Mammary epithelial cell (primary cell): ENCODE measurements at regions of chr13 and their contacts with region 1.

Region 1: DNA sequence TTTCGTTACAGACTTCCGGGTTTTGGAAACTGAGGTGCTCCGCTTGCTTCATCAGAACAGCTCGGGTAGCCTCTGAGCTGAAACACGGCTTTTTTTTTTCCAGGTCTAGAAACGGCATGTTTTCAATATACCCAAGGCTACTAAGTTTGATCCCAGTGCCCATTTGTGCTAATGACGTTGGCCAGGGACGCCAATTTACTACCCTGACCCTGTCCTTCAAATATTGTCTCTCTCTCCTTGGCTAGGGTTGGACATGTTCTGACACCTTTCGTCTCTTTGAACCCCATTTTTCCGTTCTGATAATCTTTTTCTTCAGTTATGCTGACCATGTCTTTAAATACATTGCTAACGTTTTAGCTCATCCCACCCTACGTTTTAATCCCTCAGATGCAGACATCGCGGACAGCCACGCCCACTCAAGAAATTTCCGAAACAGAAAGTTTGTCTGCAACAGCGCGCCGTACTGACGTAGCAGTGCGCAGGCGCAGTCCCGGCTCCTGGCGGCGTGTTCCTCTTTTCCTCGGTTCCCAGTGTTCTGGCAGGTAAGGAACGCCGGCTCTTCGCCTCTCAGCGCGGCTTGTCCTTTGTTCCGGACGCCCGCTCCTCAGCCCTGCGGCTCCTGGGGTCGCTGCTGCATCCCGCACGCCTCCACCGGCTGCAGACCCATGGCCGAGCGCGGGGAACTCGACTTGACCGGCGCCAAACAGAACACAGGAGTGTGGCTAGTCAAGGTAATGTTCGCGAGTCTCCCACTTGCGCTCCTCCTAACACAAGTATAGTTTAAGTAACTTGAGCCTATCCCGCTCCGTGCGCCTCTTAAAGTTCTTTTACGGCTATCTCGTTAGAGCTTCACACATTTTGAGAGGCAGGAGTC is at the start of gene GTF2F2:
- DNase-seq: peak; percentile 85
- H3K4me3 ChIP-seq: peak within 1 kb of the TSS; percentile 75 to 93 (median 82)
- H3K27ac ChIP-seq: peak within 1 kb of the TSS; percentile 87
- H3K4me1 ChIP-seq: peaks cover 13% of the 10 kb centered on the region
- H3K27me3 ChIP-seq: no peaks in the 10 kb centered on the region
- CTCF ChIP-seq: no peak
- total RNA-seq, gene GTF2F2: 26.5 to 48.9 TPM

Region 2: GRCh38 chr13:44969551-44970484 is 150.4 kb before region 1 on chr13:
- CTCF ChIA-PET with region 1: no interaction called
- dilution Hi-C with region 1: no loop called
- in situ Hi-C with region 1: no loop called
- intact Hi-C with region 1: no loop called
- DNase-seq: peak; percentile 28
- H3K4me3 ChIP-seq: no peak overlapping the region
- H3K27ac ChIP-seq: no peak overlapping the region
- H3K4me1 ChIP-seq: peaks cover 3% of the 10 kb centered on the region
- H3K27me3 ChIP-seq: no peaks in the 10 kb centered on the region
- CTCF ChIP-seq: peak; percentile 68 to 72

Region 3: GRCh38 chr13:45047394-45048310 is 72.6 kb before region 1 on chr13:
- CTCF ChIA-PET with region 1: no interaction called
- dilution Hi-C with region 1: no loop called
- in situ Hi-C with region 1: loop called in 1 of 2 experiments (anchors 5 kb)
- intact Hi-C with region 1: loop called (anchors 1 kb)
- DNase-seq: peak; percentile 77
- H3K4me3 ChIP-seq: peak overlapping the region; percentile 48 to 59 (median 52)
- H3K27ac ChIP-seq: peak overlapping the region; percentile 16
- H3K4me1 ChIP-seq: peaks cover 9% of the 10 kb centered on the region
- H3K27me3 ChIP-seq: no peaks in the 10 kb centered on the region
- CTCF ChIP-seq: peak; percentile 92 to 94

Region 4: DNA sequence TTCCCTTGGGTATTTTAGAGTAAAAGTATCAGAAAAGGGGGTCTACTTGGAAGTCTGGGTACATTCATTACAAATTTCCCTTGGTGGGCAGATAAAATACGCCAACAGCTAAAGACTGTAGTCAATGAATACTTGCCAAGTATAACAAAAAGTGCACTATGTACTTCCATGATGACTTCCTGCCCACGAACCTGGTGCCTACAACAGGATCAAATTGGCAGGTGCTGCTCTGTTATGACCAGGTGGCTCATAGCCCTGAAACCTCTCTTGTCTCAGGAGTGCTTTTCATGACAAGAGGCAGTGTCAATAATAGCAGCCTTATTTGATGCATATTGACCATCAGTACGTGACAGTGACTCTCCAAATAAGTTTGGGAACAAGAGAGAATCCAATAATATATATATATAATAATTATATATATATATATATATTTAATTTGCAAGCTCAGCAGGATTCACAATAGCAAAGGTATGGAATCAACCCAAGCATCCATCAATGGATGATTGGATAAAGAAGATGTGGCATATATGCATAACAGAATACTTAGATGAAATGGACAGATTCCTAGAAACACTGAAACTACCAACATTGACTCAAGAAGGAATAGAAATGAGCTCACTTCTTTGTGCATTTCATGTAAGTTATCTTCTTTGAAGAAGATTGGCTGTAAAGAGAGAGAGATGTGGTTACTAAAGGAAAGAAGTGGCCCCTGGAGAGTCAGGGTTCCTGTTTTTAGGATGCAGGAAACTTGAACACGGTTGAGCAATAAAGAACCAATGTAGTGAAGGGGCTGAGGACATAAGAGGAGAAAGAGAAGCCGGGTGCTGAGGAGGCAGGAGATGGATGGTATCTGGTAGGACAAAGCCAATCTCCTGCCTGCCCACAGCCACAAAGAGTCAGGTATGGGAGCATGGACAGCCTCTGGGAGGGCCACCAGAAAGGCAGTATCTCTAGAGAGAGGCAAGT is 51.9 kb before region 1 on chr13:
- CTCF ChIA-PET with region 1: no interaction called
- dilution Hi-C with region 1: loop called (anchors 5 kb)
- in situ Hi-C with region 1: no loop called
- intact Hi-C with region 1: no loop called
- DNase-seq: no peak
- H3K4me3 ChIP-seq: no peak overlapping the region
- H3K27ac ChIP-seq: no peak overlapping the region
- H3K4me1 ChIP-seq: no peaks in the 10 kb centered on the region
- H3K27me3 ChIP-seq: no peaks in the 10 kb centered on the region
- CTCF ChIP-seq: no peak

Region 5: DNA sequence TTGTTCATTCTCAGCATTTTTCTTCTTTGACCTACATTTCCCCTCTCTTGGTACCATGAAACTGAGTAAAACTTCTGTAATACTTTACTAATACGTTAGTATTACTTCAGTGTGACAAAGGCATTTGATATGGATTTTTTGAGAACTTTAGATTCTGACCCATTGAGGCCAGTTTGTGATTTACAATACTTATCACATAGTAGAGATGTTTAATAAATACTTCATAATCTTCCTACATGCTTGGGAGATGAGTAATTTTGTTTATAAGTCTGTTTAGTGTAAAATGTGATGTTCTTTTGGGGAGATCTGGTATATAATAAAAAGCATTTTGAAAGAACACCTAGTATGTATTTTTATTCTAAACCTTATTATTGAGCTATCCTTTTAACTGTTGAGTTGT is 29.7 kb after region 1 on chr13:
- CTCF ChIA-PET with region 1: no interaction called
- dilution Hi-C with region 1: no loop called
- in situ Hi-C with region 1: no loop called
- intact Hi-C with region 1: no loop called
- DNase-seq: no peak
- H3K4me3 ChIP-seq: no peak overlapping the region
- H3K27ac ChIP-seq: no peak overlapping the region
- H3K4me1 ChIP-seq: peaks cover 8% of the 10 kb centered on the region
- H3K27me3 ChIP-seq: no peaks in the 10 kb centered on the region
- CTCF ChIP-seq: no peak

Region 6: GRCh38 chr13:45180713-45181601 is 60.7 kb after region 1 on chr13:
- CTCF ChIA-PET with region 1: interaction called, 11 read pairs
- dilution Hi-C with region 1: no loop called
- in situ Hi-C with region 1: no loop called
- intact Hi-C with region 1: no loop called
- DNase-seq: no peak
- H3K4me3 ChIP-seq: no peak overlapping the region
- H3K27ac ChIP-seq: no peak overlapping the region
- H3K4me1 ChIP-seq: peaks cover 6% of the 10 kb centered on the region
- H3K27me3 ChIP-seq: peaks cover 1% of the 10 kb centered on the region
- CTCF ChIP-seq: no peak

Region 7: DNA sequence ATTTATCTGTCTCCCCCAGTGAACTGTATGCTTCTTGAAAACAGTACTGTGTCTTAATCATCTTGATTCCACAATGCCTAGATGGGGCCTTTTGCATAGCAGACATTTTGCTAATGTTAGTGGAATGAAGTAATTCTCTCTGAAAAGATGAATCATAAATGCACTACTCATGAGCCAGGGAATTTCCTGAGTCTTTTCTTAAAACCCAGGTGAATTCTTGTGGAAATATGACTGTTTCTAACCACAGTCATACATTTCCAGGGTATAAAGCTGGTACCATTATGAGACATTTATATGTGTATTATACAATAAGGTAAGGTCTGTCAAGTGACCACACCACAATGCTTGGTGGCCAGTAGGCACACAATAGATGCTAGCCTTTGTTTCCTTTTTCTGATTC is 86.1 kb after region 1 on chr13:
- CTCF ChIA-PET with region 1: no interaction called
- dilution Hi-C with region 1: no loop called
- in situ Hi-C with region 1: no loop called
- intact Hi-C with region 1: loop called (anchors 2 kb)
- DNase-seq: peak; percentile 96
- H3K4me3 ChIP-seq: peak overlapping the region in 1 of 3 experiments; percentile 41
- H3K27ac ChIP-seq: peak overlapping the region; percentile 94
- H3K4me1 ChIP-seq: peaks cover 51% of the 10 kb centered on the region
- H3K27me3 ChIP-seq: no peaks in the 10 kb centered on the region
- CTCF ChIP-seq: no peak

Region 8: GRCh38 chr13:45280751-45281634 is 160.8 kb after region 1 on chr13:
- CTCF ChIA-PET with region 1: no interaction called
- dilution Hi-C with region 1: no loop called
- in situ Hi-C with region 1: no loop called
- intact Hi-C with region 1: loop called (anchors 1 kb)
- DNase-seq: peak; percentile 84
- H3K4me3 ChIP-seq: no peak overlapping the region
- H3K27ac ChIP-seq: peak overlapping the region; percentile 27
- H3K4me1 ChIP-seq: peaks cover 20% of the 10 kb centered on the region
- H3K27me3 ChIP-seq: no peaks in the 10 kb centered on the region
- CTCF ChIP-seq: peak; percentile 95 to 96